ENCODE measurements at regions of chr11 and their contacts with region 1.

Region 1: DNA sequence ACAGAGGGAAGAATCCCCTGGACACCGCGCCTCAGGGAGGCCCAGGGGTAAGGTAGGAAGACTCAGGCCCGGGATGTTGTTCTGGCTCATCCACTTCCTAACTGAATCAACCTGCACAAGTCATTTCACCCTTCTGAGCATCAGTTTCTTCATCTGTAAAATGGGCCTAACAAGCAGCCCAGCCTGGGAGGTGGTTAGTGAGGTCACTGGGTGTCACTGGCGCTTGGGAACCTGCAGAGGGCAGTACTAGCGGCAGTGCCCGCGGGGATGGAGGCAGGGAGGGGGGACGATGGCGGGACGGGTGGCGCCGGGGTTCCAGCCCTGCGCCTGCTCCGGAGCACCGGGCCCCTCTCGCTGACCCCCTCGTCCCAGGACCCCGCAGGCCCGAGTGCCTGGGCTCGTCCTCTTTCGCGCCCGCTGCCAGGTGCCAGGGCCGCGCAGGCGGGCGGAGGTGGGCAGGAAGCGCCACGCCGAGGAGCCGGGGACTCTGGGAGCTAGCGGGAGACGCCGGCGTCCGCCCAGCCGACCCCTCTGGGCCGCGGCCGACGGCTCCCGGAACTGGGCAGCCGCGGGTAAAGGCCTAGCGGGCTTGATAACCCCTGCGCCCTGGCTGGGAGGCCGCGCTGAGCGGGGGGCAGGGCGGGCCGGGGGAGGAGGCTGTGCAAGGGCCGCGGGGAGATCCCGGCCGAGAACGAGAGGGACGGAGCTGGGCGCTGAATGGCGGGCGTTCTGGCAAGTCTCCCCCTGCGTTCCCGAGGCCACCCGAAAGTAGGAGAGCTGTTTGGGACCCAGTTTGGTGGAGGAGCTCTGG is at the start of gene NLRX1:
- DNase-seq: peak; percentile 96
- CTCF ChIP-seq: peak; percentile 98

Region 2: GRCh38 chr11:119144825-119145486 is 23.7 kb before region 1 on chr11:
- CTCF ChIA-PET with region 1: interaction called, 45 read pairs
- POLR2A ChIA-PET with region 1: no interaction called
- DNase-seq: peak; percentile 82
- CTCF ChIP-seq: peak; percentile 61

Region 3: GRCh38 chr11:119155733-119156492 is 12.8 kb before region 1 on chr11:
- CTCF ChIA-PET with region 1: interaction called, 46 read pairs
- POLR2A ChIA-PET with region 1: no interaction called
- DNase-seq: no peak
- CTCF ChIP-seq: no peak

Region 4: GRCh38 chr11:119181677-119182412 is 13.2 kb after region 1 on chr11:
- CTCF ChIA-PET with region 1: interaction called, 11 read pairs
- POLR2A ChIA-PET with region 1: no interaction called
- DNase-seq: no peak
- CTCF ChIP-seq: no peak

Region 5: GRCh38 chr11:119190531-119190930 is 21.9 kb after region 1 on chr11:
- CTCF ChIA-PET with region 1: interaction called, 17 read pairs
- POLR2A ChIA-PET with region 1: no interaction called
- DNase-seq: no peak
- CTCF ChIP-seq: no peak

Region 6: DNA sequence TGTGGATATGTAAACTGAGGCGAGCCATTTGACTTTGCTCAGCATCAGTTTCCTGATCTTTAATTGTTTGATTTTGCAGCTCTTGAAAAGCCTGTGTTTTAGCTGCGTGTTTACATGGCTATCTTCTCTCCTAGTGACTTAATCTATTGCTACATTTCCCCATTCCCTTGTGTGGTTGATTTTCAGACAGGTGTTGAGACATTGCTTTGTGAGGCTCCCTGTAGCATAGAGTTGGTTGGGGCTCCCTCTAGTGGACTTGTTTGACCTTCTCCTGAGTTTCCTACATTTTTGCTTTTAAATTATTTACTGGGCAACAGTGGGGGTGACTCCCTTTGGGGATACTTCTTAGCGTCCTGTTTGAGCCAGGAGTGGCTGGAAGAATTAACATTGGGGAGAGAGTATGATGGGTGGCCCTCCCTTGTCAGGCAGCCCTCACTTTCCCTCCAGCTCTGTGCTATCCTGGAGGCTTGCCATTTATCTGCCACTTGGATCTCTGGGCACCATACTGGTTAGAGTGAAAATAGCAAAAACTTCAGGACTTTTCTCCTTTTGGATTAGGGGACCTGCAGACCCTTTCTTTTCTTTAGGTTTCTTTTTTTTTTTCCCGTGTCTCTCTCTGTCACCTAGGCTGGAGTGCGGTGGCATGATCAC is 28.3 kb after region 1 on chr11:
- CTCF ChIA-PET with region 1: interaction called, 17 read pairs
- POLR2A ChIA-PET with region 1: no interaction called
- DNase-seq: peak; percentile 84
- CTCF ChIP-seq: peak; percentile 70

Region 7: DNA sequence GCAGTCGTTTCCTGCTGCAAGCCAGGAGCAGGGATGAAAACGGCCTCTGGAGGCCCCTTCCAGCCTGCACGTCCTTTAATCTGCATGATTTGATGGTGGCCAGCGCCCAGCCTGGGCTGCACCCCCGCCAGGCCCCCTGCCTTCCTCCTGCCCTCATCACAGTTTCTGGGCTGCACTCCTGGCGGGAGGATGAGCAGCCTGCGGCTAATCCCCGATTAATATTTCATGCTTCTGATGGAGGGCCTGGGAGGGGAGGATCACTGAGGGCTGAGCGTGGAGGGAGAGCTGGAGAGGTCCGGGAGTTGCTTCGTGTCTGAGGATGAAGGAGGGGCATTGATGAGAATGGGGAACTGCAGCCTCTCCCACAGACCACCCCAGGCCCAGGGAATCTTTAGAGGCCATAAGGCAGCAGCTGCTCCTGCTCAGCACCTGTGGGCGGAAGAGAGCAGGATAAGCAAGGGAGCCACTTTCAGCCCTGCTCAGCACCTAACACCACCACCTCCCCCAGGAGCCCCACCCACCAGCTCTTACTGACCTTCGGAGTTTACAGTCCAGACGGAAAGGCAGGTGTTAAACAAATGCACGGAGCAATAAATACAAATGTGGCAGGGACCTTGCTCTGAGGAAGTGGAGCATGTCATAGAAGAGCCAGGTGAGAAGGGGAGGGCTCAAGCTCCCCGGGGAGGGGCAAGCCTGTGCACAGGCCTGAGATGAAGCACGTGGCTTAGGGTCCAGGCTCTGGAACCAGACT is 695.4 kb after region 1 on chr11:
- CTCF ChIA-PET with region 1: no interaction called
- POLR2A ChIA-PET with region 1: no interaction called
- DNase-seq: no peak
- CTCF ChIP-seq: no peak

Measured in GM10248 (cell line).